GM12878 (cell line): ENCODE measurements at regions of chrX and their contacts with region 1.

Region 1: DNA sequence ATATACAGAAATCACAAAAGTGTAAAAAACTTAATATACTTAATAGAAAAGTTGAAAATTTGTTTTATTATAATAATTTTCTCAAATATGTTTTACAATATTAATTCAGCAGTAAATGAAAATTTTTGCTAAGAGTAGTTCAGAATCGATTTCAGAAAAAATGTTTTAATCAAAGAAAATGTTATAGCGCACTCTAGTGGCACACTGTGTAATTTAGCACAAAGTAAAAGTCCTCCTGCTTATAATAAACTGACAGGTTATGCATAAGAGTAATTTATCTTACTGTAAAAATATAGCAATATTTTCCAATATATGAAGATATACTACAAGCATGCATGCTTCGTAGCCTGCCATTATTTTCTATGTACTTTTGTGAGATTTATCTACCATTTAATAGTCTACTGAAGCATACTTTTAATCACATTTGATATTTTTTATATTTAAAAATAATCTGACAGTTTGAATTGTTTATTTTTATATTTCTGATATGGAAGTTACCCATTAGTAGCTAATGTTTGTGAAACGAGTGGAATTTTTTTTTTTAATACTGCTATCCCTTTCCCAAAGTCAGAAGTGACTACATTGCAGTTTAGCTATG is 217.9 kb upstream of the KLHL4 start:
- DNase-seq: no peak
- ATAC-seq: no peak
- H3K4me3 ChIP-seq: no peak overlapping the region
- H3K27ac ChIP-seq: no peak overlapping the region
- H3K4me1 ChIP-seq: no peaks in the 10 kb centered on the region
- H3K27me3 ChIP-seq: no peaks in the 10 kb centered on the region
- CTCF ChIP-seq: peak; percentile 43 to 57 (median 49); a peak in 4 of 6 replicates
- EP300 ChIP-seq: no peak
- POLR2A ChIP-seq: no peak
- RAD21 ChIP-seq: peak; percentile 57

Region 2: DNA sequence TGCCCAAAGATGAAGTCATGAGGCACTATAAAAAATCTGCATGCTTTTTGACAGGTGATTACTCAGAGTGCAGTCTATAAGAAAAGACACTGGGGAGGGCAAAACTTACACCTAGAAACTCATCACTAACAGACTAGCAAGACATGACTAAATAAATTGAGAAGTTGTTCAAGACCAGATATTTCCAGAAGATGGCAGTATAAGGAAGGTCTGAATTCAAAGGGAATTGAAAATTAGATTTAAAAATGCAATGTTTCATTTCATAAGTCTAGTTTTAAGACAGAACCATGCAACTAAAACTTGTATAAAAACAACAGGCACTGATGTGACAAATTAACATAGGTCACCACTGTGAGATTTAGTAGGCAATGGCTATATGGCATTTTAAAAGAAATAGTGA is 1687.7 kb before region 1 on chrX:
- CTCF ChIA-PET with region 1: no interaction called
- POLR2A ChIA-PET with region 1: no interaction called
- RAD21 ChIA-PET with region 1: no interaction called
- SMC1A ChIA-PET with region 1: no interaction called
- in situ Hi-C with region 1: loop called (anchors 25 kb)
- intact Hi-C with region 1: no loop called
- DNase-seq: no peak
- ATAC-seq: peak; percentile 46; the same call in 2 of the 3 replicates
- H3K4me3 ChIP-seq: no peak overlapping the region
- H3K27ac ChIP-seq: no peak overlapping the region
- H3K4me1 ChIP-seq: no peaks in the 10 kb centered on the region
- H3K27me3 ChIP-seq: no peaks in the 10 kb centered on the region
- CTCF ChIP-seq: peak; percentile 18 to 29 (median 18); a peak in 1 of 6 replicates
- EP300 ChIP-seq: no peak
- POLR2A ChIP-seq: no peak
- RAD21 ChIP-seq: peak; percentile 42

Region 3: DNA sequence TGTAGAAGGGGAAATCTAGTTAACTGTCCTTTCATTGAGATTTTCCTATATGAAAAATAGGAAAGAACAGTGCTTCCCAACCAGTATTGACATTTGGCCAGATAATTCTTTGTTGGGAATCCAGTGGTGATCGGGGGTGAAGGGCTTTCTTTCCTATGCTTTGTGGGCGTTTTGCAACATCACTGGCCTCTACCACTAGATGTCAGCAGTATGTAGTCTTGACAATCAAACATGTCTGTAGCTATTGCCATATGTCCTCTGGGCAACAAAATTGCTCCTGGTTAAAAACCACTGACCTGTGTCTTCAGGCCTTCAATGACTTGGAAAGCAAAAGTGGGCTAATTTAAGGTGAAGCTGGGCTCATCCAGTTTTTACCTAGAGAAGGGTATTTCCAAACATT is 492.9 kb before region 1 on chrX:
- CTCF ChIA-PET with region 1: interaction called, 3 read pairs
- POLR2A ChIA-PET with region 1: no interaction called
- RAD21 ChIA-PET with region 1: interaction called, 3 read pairs
- SMC1A ChIA-PET with region 1: interaction called, 5 read pairs
- in situ Hi-C with region 1: no loop called
- intact Hi-C with region 1: loop called (anchors 2 kb)
- DNase-seq: no peak
- ATAC-seq: peak; percentile 68
- H3K4me3 ChIP-seq: no peak overlapping the region
- H3K27ac ChIP-seq: no peak overlapping the region
- H3K4me1 ChIP-seq: no peaks in the 10 kb centered on the region
- H3K27me3 ChIP-seq: no peaks in the 10 kb centered on the region
- CTCF ChIP-seq: peak; percentile 47 to 53 (median 49); a peak in 5 of 6 replicates
- EP300 ChIP-seq: no peak
- POLR2A ChIP-seq: no peak
- RAD21 ChIP-seq: peak; percentile 41